Uterus (tissue), 4 donors: ENCODE measurements at regions of chr1 and their contacts with region 1.

Region 1: DNA sequence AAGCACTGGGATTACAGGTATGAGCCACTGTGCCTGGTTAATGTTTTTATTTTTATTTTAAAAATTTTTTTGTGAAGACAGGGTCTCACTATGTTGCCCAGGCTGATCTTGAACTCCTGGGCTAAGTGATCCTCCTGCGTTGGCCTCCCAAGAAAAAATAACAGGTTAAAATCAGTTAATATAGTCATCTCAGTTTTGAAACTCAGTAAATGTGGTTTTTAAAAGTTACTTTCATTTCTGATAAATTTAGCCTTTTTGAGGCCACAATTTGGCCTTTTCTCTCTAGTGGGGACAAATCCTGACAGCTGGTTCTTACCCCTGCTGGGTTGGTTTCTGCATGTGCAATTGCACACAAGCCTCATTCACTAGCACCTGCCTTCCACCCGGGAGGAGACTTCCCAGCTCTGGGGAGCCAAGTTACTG is 13.3 kb downstream of the PMF1 start:
- DNase-seq: no peak
- H3K4me3 ChIP-seq: no peak overlapping the region
- H3K27ac ChIP-seq: no peak overlapping the region
- H3K4me1 ChIP-seq: no peaks in the 10 kb centered on the region
- H3K27me3 ChIP-seq: no peaks in the 10 kb centered on the region
- CTCF ChIP-seq: no peak
- POLR2A ChIP-seq: no peak

Region 2: GRCh38 chr1:156146020-156146768 is 79.9 kb before region 1 on chr1:
- intact Hi-C with region 1: loop called (anchors 5 kb)
- DNase-seq: peak in 1 of 2 donors; percentile 49
- H3K4me3 ChIP-seq: peak overlapping the region in 1 of 2 donors; percentile 6
- H3K27ac ChIP-seq: peak overlapping the region in 1 of 2 donors; percentile 45
- H3K4me1 ChIP-seq: peaks cover 0 to 3% of the 10 kb centered on the region in 2 donors
- H3K27me3 ChIP-seq: peaks cover 0 to 2% of the 10 kb centered on the region in 2 donors
- CTCF ChIP-seq: peak; percentile 65 to 83 (median 73)
- POLR2A ChIP-seq: no peak

Region 3: GRCh38 chr1:156295391-156295947 is 69.3 kb after region 1 on chr1 and contains the start of gene GLMP:
- intact Hi-C with region 1: no loop called
- DNase-seq: peak; percentile 69
- H3K4me3 ChIP-seq: peak within 1 kb of the TSS; percentile 54 to 56
- H3K27ac ChIP-seq: peak within 1 kb of the TSS; percentile 64 to 80
- H3K4me1 ChIP-seq: peaks cover 0 to 17% of the 10 kb centered on the region in 2 donors
- H3K27me3 ChIP-seq: no peaks in the 10 kb centered on the region
- CTCF ChIP-seq: no peak
- POLR2A ChIP-seq: no peak
- total RNA-seq, gene GLMP: 23.8 to 31.1 (median 27.7) TPM